Activated T-helper 2 cell treated with anti-CD3 and anti-CD28 coated beads, Interferon-gamma antibody, Interleukin-2, Interleukin-4, amounts not matched to agents 10 μg/mL and 5 μg/mL and 100 μg/mL, durations not matched to agents 14 hours and 24 hours and 36 hours (primary cell): ENCODE measurements at regions of chr2 and their contacts with region 1.

Region 1: DNA sequence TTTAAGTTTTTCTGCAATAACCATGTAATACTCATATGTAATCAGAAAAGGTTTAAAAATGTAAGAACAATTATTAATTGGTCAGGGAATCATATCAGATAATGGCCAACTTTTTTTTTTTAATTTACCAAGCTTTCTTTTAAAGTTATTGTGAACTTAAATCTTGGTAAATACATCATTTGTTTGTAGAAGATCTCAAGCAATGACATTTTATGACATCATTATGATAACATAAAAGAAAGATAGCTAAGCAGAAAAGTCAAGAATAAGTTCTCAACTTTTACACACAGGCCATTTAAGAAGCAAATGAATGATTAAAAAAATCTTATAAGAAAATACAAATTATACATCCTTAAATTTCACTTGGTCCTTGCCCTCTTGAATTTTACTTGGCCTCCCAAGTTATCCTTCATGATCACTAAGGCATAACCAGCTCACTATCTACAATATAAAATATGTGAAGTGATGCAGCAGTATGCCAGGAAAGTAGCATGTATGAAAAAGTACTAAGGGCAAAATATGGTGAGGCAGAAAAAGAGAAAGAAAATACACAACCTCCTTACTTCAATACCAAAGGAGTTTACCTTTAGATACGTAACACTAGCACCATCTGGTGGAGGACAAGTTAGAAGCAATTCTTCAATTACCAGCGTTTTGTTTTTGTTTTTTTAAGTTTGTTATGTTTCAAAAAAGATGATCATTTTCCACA is 116.6 kb downstream of the SRBD1 start:
- DNase-seq: no peak
- H3K4me3 Mint-ChIP-seq: no peak overlapping the region
- H3K27ac Mint-ChIP-seq: no peak overlapping the region
- H3K4me1 Mint-ChIP-seq: peaks cover 34% of the 10 kb centered on the region
- H3K27me3 Mint-ChIP-seq: no peaks in the 10 kb centered on the region

Region 2: GRCh38 chr2:44981136-44982108 is 513.0 kb before region 1 on chr2:
- intact Hi-C with region 1: loop called (anchors 1 kb)
- DNase-seq: peak; percentile 47
- H3K4me3 Mint-ChIP-seq: no peak overlapping the region
- H3K27ac Mint-ChIP-seq: no peak overlapping the region
- H3K4me1 Mint-ChIP-seq: peaks cover 2% of the 10 kb centered on the region
- H3K27me3 Mint-ChIP-seq: peaks cover 17% of the 10 kb centered on the region

Region 3: DNA sequence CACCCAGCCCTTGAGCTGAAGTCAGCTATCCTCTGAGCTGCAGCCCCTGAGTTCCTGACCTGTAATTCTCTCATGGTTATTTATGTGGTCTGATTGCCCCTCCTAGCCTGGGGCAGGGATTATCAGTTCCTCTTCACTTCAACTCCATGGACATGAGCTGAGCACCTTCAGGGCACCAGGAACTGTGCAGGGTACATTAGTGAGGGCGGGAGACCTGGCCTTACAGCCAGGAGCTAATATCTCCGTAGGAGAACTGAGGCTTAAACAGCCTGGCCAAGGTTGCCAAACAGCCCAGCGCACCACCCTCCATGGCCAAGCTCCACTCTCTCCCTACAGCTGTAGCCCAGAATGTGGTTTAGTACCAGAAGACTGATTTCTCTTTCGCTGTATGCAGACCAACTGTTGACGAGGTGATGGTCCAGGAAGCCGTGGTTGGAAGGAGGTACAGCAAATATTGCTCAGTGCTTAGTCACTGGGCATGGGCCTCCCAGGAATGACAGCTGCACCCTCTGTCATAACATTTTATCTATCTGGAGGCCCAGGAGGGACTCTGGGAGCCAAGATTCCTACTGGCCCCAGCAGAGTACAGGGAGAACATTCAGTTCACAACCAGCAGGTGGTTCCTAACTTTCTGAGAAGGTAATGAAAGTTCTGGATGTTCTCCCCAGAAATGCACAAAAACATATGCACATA is 256.4 kb before region 1 on chr2:
- intact Hi-C with region 1: loop called (anchors 10 kb)
- DNase-seq: no peak
- H3K4me3 Mint-ChIP-seq: no peak overlapping the region
- H3K27ac Mint-ChIP-seq: no peak overlapping the region
- H3K4me1 Mint-ChIP-seq: peaks cover 7% of the 10 kb centered on the region
- H3K27me3 Mint-ChIP-seq: peaks cover 21% of the 10 kb centered on the region

Region 4: DNA sequence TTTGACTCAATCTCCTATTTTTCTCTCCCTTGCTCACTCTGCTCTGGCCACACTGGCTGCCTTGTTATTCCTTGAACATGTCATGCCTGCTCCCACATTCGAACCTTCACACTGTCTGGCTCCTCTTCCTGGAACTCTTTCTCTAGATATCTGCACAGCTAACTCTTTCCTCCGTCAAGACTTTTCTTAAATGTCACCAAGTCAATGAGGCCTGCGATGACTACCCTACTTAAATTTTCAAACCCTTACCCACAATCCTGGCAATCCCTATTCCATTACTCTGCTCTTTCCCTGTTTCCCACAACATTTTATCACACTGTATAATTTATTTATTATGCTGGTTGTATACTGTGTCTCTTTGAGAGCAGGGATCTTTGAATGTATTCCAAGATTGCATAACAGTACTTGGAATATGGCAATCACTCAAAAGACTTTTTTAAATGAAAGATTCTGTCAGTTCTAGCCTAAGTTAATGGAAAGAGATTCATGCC is 89.6 kb before region 1 on chr2:
- intact Hi-C with region 1: no loop called
- DNase-seq: no peak
- H3K4me3 Mint-ChIP-seq: no peak overlapping the region
- H3K27ac Mint-ChIP-seq: no peak overlapping the region
- H3K4me1 Mint-ChIP-seq: no peaks in the 10 kb centered on the region
- H3K27me3 Mint-ChIP-seq: no peaks in the 10 kb centered on the region

Region 5: GRCh38 chr2:45505138-45505537 is 10.7 kb after region 1 on chr2:
- intact Hi-C with region 1: no loop called
- DNase-seq: no peak
- H3K4me3 Mint-ChIP-seq: no peak overlapping the region
- H3K27ac Mint-ChIP-seq: no peak overlapping the region
- H3K4me1 Mint-ChIP-seq: peaks cover 11% of the 10 kb centered on the region
- H3K27me3 Mint-ChIP-seq: no peaks in the 10 kb centered on the region

Region 6: GRCh38 chr2:45554073-45554741 is 59.8 kb after region 1 on chr2:
- intact Hi-C with region 1: loop called (anchors 1 kb)
- DNase-seq: no peak
- H3K4me3 Mint-ChIP-seq: peak overlapping the region; percentile 9
- H3K27ac Mint-ChIP-seq: peak overlapping the region; percentile 89
- H3K4me1 Mint-ChIP-seq: peaks cover 36% of the 10 kb centered on the region
- H3K27me3 Mint-ChIP-seq: no peaks in the 10 kb centered on the region

Region 7: DNA sequence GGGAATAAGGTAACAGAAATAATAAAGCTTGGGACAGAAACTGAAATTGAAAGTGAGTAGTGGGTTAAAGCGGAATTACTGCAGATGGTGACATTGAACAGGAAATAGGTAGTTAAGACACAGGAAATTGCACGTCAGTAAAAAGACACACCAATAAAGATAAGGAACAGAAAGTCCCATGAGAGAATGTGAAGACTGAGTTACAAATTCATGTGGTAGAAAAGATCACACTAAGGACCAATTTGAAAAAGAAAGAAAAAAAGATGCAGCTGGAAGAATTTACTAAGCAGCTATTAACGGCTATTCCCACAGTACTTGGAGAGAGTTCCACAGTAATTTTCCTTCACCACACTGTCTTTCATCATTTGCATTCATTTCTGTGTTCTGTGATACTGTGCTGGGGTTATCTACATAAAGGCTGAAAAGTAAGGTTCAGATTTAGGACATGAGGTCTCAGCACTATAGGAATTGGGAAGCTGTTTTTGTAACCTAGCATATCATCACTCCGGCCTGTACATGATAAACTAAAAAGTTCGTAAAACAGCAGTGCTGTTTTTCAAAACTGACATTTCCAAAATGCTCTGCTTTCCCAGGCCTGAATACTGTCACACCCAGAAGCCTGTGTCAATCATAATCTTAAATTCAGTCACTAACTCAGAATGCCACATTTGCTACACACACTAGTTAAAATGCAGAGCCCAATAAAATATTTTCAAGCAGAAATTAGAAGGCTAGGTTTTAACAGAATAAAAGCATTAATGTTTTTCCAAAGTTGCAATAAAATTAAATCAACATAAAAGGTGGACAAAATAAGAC is 73.8 kb after region 1 on chr2:
- intact Hi-C with region 1: loop called (anchors 1 kb)
- DNase-seq: no peak
- H3K4me3 Mint-ChIP-seq: peak overlapping the region; percentile 64
- H3K27ac Mint-ChIP-seq: peak overlapping the region; percentile 92
- H3K4me1 Mint-ChIP-seq: peaks cover 36% of the 10 kb centered on the region
- H3K27me3 Mint-ChIP-seq: no peaks in the 10 kb centered on the region